ENCODE measurements at regions of chr2 and their contacts with region 1.

Region 1: DNA sequence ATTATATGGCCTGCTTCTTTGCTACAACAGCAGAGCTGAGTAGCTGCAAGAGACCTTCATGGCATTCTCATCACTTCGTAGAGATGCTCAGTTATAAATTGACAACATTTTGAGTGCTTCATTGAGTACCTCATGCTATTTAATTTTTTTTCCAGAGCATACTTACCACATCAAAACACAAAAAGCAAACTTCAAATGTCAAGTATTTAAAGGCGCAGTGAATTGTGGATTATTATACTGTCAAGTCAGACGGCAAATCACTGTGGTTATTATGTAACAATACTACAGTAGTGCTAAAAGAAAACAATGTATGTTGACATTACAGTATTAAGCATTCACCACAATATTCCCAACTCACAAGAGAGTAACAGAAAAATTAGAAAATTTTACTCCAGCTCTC is 12.5 kb downstream of the ZC3H8 start:
- DNase-seq: no peak
- ATAC-seq: no peak
- H3K4me3 ChIP-seq: no peak overlapping the region
- H3K27ac ChIP-seq: no peak overlapping the region
- H3K4me1 ChIP-seq: peaks cover 0 to 3% (median 0%) of the 10 kb centered on the region in 9 donors
- H3K27me3 ChIP-seq: no peaks in the 10 kb centered on the region
- CTCF ChIP-seq: no peak

Region 2: GRCh38 chr2:112121682-112122254 is 120.6 kb before region 1 on chr2:
- intact Hi-C with region 1: loop called in 1 of 10 experiments (anchors 10 kb)
- DNase-seq: no peak
- ATAC-seq: no peak
- H3K4me3 ChIP-seq: no peak overlapping the region
- H3K27ac ChIP-seq: no peak overlapping the region
- H3K4me1 ChIP-seq: no peaks in the 10 kb centered on the region
- H3K27me3 ChIP-seq: no peaks in the 10 kb centered on the region
- CTCF ChIP-seq: peak; percentile 38 to 74 (median 66)